ENCODE measurements at regions of chr3 and their contacts with region 1.

Region 1: DNA sequence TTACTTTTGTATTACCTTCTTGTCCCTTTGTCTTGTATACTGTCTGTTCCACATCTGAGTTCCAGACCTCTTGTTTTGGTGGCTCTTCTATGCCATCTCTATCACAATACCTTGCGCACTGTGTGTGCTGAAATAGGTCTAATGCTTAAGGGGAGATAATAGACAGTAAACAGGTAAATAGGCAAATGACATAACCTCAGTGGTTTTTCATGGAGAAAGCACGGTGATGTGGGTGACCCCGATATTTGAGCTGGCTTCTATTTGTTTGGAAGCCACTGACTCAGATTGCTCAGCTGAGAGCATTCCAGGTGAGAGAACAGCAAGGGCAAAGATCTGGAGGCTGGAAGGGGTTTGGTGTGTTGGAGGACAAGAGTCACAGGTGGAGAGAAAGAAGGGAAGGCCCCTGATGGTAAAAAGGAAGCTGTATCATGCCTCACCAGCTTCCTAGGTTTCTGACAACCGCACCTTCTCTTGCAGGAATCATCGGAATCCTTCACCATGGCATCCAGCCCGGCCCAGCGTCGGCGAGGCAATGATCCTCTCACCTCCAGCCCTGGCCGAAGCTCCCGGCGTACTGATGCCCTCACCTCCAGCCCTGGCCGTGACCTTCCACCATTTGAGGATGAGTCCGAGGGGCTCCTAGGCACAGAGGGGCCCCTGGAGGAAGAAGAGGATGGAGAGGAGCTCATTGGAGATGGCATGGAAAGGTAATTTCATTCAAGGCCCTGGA is 795 bp downstream of the MCM2 start:
- DNase-seq: no peak
- ATAC-seq: no peak
- H3K4me3 Mint-ChIP-seq: peak overlapping the region; percentile 80
- H3K27ac Mint-ChIP-seq: peak overlapping the region; percentile 96
- H3K4me1 Mint-ChIP-seq: peaks cover 41% of the 10 kb centered on the region
- H3K27me3 Mint-ChIP-seq: no peaks in the 10 kb centered on the region

Region 2: GRCh38 chr3:126703512-126704462 is 895.2 kb before region 1 on chr3 and contains the start of gene CHCHD6:
- CTCF ChIA-PET with region 1: no interaction called
- POLR2A ChIA-PET with region 1: no interaction called
- intact Hi-C with region 1: loop called in 1 of 2 experiments (anchors 2 kb)
- DNase-seq: peak; percentile 98
- ATAC-seq: peak; percentile 99
- H3K4me3 Mint-ChIP-seq: peak within 1 kb of the TSS; percentile 92
- H3K27ac Mint-ChIP-seq: peak within 1 kb of the TSS; percentile 82
- H3K4me1 Mint-ChIP-seq: peaks cover 23% of the 10 kb centered on the region
- H3K27me3 Mint-ChIP-seq: peaks cover 9% of the 10 kb centered on the region
- total RNA-seq, gene CHCHD6: 17.1 to 17.7 TPM

Region 3: GRCh38 chr3:127002195-127003174 is 596.5 kb before region 1 on chr3:
- CTCF ChIA-PET with region 1: no interaction called
- POLR2A ChIA-PET with region 1: no interaction called
- intact Hi-C with region 1: no loop called
- DNase-seq: peak; percentile 20
- ATAC-seq: no peak
- H3K4me3 Mint-ChIP-seq: no peak overlapping the region
- H3K27ac Mint-ChIP-seq: no peak overlapping the region
- H3K4me1 Mint-ChIP-seq: no peaks in the 10 kb centered on the region
- H3K27me3 Mint-ChIP-seq: no peaks in the 10 kb centered on the region

Region 4: GRCh38 chr3:127610105-127610504 is 11.1 kb after region 1 on chr3:
- CTCF ChIA-PET with region 1: interaction called, 3 read pairs
- POLR2A ChIA-PET with region 1: interaction called, 15 read pairs
- intact Hi-C with region 1: no loop called
- DNase-seq: no peak
- ATAC-seq: no peak
- H3K4me3 Mint-ChIP-seq: no peak overlapping the region
- H3K27ac Mint-ChIP-seq: no peak overlapping the region
- H3K4me1 Mint-ChIP-seq: no peaks in the 10 kb centered on the region
- H3K27me3 Mint-ChIP-seq: no peaks in the 10 kb centered on the region

Region 5: DNA sequence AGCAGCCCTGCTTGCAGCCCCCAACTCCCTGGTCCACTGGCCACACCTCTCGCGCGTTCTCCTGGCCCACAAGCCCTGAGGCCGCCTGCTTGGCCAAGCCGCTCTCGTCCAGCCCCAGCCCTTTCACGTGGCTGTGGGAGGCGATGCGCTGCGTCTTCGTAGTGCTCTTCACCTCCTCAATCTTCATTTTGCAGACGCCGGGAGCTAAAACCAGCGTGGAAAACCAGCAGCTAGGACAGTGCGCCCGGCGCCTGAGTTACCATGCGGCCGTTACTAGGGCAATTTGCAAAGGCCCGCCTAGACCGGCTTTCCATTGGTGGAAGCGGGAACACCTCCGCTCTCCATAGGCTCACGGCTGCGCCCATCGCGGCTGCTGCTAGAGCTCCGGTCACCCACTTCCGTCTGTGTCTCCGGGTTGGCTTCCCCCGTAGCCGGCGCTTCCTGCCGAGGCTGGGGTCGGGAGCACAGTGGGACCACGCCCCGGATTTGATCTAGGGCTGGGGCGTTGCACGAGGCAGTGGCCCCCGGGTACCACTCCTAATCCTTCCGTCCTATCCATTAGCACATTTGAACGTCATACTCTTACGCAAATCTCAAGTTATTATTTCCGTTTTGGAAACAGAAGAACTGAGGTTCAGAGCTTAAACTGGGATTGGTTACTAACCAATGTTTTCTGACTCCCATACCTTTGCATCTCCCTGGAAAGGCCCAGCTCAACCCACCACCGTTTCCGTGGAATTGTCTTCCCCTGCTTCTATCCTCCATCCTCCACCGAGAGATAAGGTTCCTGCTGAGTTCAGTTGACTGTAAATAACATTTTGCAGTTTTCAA is 524.7 kb after region 1 on chr3 and contains the start of gene RUVBL1:
- CTCF ChIA-PET with region 1: no interaction called
- POLR2A ChIA-PET with region 1: no interaction called
- intact Hi-C with region 1: loop called in 1 of 2 experiments (anchors 1 kb)
- DNase-seq: peak; percentile 99
- ATAC-seq: peak; percentile 99
- H3K4me3 Mint-ChIP-seq: peak within 1 kb of the TSS; percentile 99
- H3K27ac Mint-ChIP-seq: peak within 1 kb of the TSS; percentile 96
- H3K4me1 Mint-ChIP-seq: peaks cover 30% of the 10 kb centered on the region
- H3K27me3 Mint-ChIP-seq: no peaks in the 10 kb centered on the region
- total RNA-seq, gene RUVBL1: 97.0 to 99.9 TPM

Region 6: DNA sequence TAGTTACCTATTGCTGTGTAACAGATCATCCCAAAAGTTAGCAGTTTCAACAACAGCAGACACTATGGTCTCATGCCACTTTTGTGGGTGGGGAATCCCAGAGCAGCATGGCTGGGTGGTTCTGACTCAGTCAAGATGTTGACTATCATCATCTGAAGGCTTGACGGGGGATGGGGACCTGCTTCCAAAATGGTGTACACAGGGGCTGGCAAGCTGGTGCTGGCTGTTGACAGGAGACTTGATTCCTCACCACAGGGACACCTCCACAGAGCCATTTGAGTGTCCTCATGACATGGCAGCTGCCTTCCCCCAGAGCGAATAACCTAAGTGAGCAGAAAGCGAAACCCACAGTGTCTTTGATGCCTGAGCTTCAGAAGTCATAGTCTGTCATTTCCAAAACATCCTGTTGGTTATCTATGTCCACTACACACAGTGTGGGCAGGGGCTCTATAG is 848.6 kb after region 1 on chr3:
- CTCF ChIA-PET with region 1: no interaction called
- POLR2A ChIA-PET with region 1: no interaction called
- intact Hi-C with region 1: loop called in 1 of 2 experiments (anchors 5 kb)
- DNase-seq: peak; percentile 92
- ATAC-seq: peak; percentile 82
- H3K4me3 Mint-ChIP-seq: peak overlapping the region; percentile 28
- H3K27ac Mint-ChIP-seq: peak overlapping the region; percentile 93
- H3K4me1 Mint-ChIP-seq: peaks cover 40% of the 10 kb centered on the region
- H3K27me3 Mint-ChIP-seq: peaks cover 2% of the 10 kb centered on the region

Measured in activated CD4-positive, alpha-beta T cell treated with anti-CD3 and anti-CD28 coated beads for 36 hours (primary cell).